Esophagus muscularis mucosa (tissue), 4 donors: ENCODE measurements at regions of chr5 and their contacts with region 1.

Region 1: DNA sequence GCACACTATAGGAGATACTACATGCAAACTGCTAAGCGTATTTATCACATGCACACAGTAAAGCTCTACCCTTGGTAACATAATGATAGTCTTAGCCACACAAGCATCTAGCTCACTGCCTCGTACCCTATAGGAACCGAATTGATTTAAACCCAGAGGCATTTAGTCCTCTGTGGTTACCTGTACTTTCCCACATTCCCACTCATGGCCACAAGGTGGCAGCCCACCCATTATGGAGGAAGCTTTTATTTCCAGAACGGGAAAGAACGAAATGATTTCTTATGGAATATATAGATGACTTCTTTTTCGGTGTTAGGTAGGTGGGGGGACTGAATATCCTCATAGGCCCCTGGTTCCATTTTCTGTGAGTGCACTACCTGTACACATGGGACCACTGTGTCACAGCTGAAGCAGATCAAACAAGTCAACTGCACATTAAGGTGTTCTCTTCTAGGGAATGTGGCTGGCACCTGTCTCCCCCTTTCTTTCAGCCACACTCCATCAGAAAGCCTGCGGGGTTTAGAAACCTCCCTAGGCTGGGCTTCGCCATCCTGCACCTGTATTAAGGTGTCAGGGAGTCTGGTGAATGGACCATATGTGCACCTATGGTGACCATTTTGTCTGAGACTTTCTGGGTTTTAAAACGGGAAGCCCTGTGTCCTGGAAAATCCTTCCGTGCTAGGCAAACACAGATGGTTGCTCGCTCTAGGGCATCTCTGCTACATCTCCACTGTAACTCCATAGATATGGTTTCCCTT is 313.2 kb downstream of the SLIT3 start:
- DNase-seq: no peak
- H3K4me3 ChIP-seq: no peak overlapping the region
- H3K27ac ChIP-seq: no peak overlapping the region
- H3K4me1 ChIP-seq: peaks cover 0 to 27% (median 16%) of the 10 kb centered on the region in 4 donors
- H3K27me3 ChIP-seq: no peaks in the 10 kb centered on the region
- CTCF ChIP-seq: peak; percentile 81 to 95 (median 92)
- EP300 ChIP-seq: no peak
- POLR2A ChIP-seq: no peak

Region 2: GRCh38 chr5:168486136-168486879 is 501.4 kb before region 1 on chr5 and contains the start of gene RARS1:
- intact Hi-C with region 1: no loop called
- DNase-seq: peak; percentile 98
- H3K4me3 ChIP-seq: peak within 1 kb of the TSS; percentile 70 to 93 (median 84)
- H3K27ac ChIP-seq: peak within 1 kb of the TSS; percentile 72 to 88 (median 79)
- H3K4me1 ChIP-seq: peaks cover 6 to 25% (median 15%) of the 10 kb centered on the region in 4 donors
- H3K27me3 ChIP-seq: peaks cover 0 to 4% (median 0%) of the 10 kb centered on the region in 4 donors
- CTCF ChIP-seq: peak in 2 of 3 experiments; percentile 97 to 98
- EP300 ChIP-seq: no peak
- POLR2A ChIP-seq: peak; percentile 75
- total RNA-seq, gene RARS1: 53.8 to 72.3 (median 60.7) TPM

Region 3: DNA sequence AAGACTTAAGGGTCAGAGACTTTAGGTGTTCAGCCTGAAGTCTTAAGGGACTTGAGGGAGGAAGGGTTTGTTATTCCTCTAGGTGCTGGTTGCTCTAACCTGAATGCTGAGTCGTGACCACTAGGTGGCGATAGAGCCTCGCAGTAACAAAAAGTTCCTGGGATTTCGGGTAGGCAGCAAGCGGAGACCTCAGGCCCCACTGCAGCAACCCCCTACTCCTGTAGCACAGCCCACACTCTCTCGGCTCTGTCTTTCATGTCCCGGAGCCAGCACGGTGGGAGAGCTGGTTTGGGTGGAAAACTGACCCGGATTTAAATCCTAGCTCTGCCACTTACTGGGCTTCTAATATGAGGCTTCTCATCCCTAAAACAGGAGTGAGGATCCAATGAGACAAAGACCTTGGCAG is 308.2 kb before region 1 on chr5:
- intact Hi-C with region 1: loop called (anchors 5 kb)
- DNase-seq: no peak
- H3K4me3 ChIP-seq: no peak overlapping the region
- H3K27ac ChIP-seq: no peak overlapping the region
- H3K4me1 ChIP-seq: peaks cover 13 to 35% (median 17%) of the 10 kb centered on the region in 4 donors
- H3K27me3 ChIP-seq: no peaks in the 10 kb centered on the region
- CTCF ChIP-seq: peak; percentile 74 to 93 (median 84)
- EP300 ChIP-seq: no peak
- POLR2A ChIP-seq: no peak

Region 4: DNA sequence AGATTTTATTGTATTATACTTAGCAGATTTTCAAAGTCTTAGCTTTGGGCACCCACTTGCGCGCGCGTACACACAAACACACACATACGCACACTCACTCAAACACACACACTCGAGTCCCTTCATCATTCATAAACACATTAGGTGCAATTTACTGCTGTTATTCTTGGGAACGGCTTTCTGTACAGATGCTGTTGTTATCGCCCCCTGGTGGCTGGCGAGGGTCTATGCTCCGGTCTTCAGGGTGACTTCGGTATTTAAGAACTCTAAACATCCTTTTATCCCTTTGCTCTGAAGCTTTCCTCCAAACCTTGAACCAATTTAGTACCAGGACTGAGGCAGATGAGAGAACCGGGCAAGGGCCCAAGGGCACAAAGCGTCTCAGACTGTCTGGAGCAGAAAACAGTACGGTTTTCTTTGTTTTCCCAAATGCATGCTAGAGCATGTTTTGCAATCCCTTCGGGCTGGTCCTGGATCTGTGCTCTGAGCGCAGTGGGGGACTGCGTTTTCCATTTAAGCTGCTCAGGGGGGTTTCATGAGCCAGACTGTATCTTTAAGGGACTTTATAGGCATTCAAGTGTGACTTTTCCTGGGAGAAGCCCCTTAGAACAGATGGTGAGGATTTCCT is 314.9 kb after region 1 on chr5:
- intact Hi-C with region 1: loop called (anchors 1 kb)
- DNase-seq: no peak
- H3K4me3 ChIP-seq: no peak overlapping the region
- H3K27ac ChIP-seq: peak overlapping the region in 2 of 4 donors; percentile 84 to 89
- H3K4me1 ChIP-seq: peaks cover 8 to 50% (median 42%) of the 10 kb centered on the region in 4 donors
- H3K27me3 ChIP-seq: peaks cover 0 to 19% (median 0%) of the 10 kb centered on the region in 4 donors
- CTCF ChIP-seq: peak; percentile 88 to 95 (median 91)
- EP300 ChIP-seq: no peak
- POLR2A ChIP-seq: no peak

Region 5: DNA sequence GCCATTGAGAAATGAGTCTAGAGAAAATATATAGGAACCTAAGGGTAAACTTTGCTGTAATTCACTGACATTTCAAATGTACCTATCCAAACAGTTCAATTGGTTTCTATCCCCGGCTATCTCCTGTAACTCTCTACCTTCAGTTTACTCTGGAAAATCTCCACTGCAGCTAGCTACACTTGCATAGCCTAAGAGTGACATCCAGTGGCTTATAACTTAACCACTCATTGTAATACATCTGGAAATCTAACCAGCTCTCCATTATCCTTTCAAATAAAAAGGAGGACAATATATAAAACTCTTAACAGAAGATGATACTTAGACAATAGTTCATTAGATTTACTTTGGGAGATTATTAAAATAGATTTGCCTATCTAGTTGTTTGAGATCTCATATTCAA is 560.6 kb after region 1 on chr5:
- intact Hi-C with region 1: loop called (anchors 10 kb)
- DNase-seq: no peak
- H3K4me3 ChIP-seq: no peak overlapping the region
- H3K27ac ChIP-seq: no peak overlapping the region
- H3K4me1 ChIP-seq: no peaks in the 10 kb centered on the region
- H3K27me3 ChIP-seq: peaks cover 0 to 6% (median 0%) of the 10 kb centered on the region in 4 donors
- CTCF ChIP-seq: peak; percentile 29 to 40 (median 31)
- EP300 ChIP-seq: no peak
- POLR2A ChIP-seq: no peak

Region 6: GRCh38 chr5:169583424-169584204 is 595.9 kb after region 1 on chr5 and contains the start of gene SPDL1:
- intact Hi-C with region 1: loop called (anchors 5 kb)
- DNase-seq: peak; percentile 98
- H3K4me3 ChIP-seq: peak within 1 kb of the TSS; percentile 73 to 84 (median 79)
- H3K27ac ChIP-seq: peak within 1 kb of the TSS; percentile 77 to 84 (median 80)
- H3K4me1 ChIP-seq: peaks cover 5 to 28% (median 18%) of the 10 kb centered on the region in 4 donors
- H3K27me3 ChIP-seq: no peaks in the 10 kb centered on the region
- CTCF ChIP-seq: no peak
- EP300 ChIP-seq: no peak
- POLR2A ChIP-seq: no peak
- total RNA-seq, gene SPDL1: 3.5 to 12.0 (median 7.0) TPM